ENCODE measurements at regions of chr9 and their contacts with region 1.

Region 1: GRCh38 chr9:306887-307286 is 92.2 kb downstream of the DOCK8 start:
- DNase-seq: peak; percentile 69
- ATAC-seq: peak; percentile 87
- H3K4me3 Mint-ChIP-seq: no peak overlapping the region
- H3K27ac Mint-ChIP-seq: no peak overlapping the region
- H3K4me1 Mint-ChIP-seq: peaks cover 17% of the 10 kb centered on the region
- H3K27me3 Mint-ChIP-seq: no peaks in the 10 kb centered on the region

Region 2: GRCh38 chr9:214648-215493 is 92.0 kb before region 1 on chr9 and contains the start of gene DOCK8:
- CTCF ChIA-PET with region 1: interaction called, 14 read pairs
- POLR2A ChIA-PET with region 1: no interaction called
- intact Hi-C with region 1: loop called in 1 of 2 experiments (anchors 2 kb)
- DNase-seq: peak; percentile 75
- ATAC-seq: peak; percentile 84
- H3K4me3 Mint-ChIP-seq: peak within 1 kb of the TSS; percentile 72
- H3K27ac Mint-ChIP-seq: peak within 1 kb of the TSS; percentile 21
- H3K4me1 Mint-ChIP-seq: peaks cover 4% of the 10 kb centered on the region
- H3K27me3 Mint-ChIP-seq: peaks cover 13% of the 10 kb centered on the region
- total RNA-seq, gene DOCK8: 100 to 125 TPM

Region 3: DNA sequence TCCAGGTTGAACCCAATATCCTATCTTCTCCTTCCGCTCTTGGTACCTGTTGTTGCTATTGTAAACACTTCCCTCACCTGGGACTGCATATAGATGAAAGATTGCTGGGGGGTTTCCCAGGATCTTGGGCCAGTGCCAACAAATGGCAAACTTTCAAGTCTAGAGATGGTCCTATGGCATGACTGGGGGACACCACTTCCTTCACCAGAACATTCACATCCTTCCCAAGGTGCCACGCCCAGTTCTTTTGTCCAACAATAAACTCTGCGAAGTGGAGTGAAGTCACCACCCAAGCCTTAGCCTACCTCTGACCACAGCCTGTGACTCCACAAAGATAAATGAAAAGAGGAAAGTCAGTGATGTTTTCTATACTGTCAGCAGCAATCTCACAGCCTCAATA is 57.9 kb before region 1 on chr9:
- CTCF ChIA-PET with region 1: no interaction called
- POLR2A ChIA-PET with region 1: no interaction called
- intact Hi-C with region 1: no loop called
- DNase-seq: peak; percentile 8
- ATAC-seq: peak; percentile 45
- H3K4me3 Mint-ChIP-seq: no peak overlapping the region
- H3K27ac Mint-ChIP-seq: peak overlapping the region; percentile 30
- H3K4me1 Mint-ChIP-seq: peaks cover 11% of the 10 kb centered on the region
- H3K27me3 Mint-ChIP-seq: no peaks in the 10 kb centered on the region

Region 4: GRCh38 chr9:503881-504852 is 197.3 kb after region 1 on chr9:
- CTCF ChIA-PET with region 1: no interaction called
- POLR2A ChIA-PET with region 1: no interaction called
- intact Hi-C with region 1: no loop called
- DNase-seq: peak; percentile 81
- ATAC-seq: peak; percentile 92
- H3K4me3 Mint-ChIP-seq: peak within 1 kb of the TSS; percentile 74
- H3K27ac Mint-ChIP-seq: peak within 1 kb of the TSS; percentile 63
- H3K4me1 Mint-ChIP-seq: peaks cover 8% of the 10 kb centered on the region
- H3K27me3 Mint-ChIP-seq: peaks cover 26% of the 10 kb centered on the region